ENCODE measurements at regions of chr1 and their contacts with region 1.

Region 1: DNA sequence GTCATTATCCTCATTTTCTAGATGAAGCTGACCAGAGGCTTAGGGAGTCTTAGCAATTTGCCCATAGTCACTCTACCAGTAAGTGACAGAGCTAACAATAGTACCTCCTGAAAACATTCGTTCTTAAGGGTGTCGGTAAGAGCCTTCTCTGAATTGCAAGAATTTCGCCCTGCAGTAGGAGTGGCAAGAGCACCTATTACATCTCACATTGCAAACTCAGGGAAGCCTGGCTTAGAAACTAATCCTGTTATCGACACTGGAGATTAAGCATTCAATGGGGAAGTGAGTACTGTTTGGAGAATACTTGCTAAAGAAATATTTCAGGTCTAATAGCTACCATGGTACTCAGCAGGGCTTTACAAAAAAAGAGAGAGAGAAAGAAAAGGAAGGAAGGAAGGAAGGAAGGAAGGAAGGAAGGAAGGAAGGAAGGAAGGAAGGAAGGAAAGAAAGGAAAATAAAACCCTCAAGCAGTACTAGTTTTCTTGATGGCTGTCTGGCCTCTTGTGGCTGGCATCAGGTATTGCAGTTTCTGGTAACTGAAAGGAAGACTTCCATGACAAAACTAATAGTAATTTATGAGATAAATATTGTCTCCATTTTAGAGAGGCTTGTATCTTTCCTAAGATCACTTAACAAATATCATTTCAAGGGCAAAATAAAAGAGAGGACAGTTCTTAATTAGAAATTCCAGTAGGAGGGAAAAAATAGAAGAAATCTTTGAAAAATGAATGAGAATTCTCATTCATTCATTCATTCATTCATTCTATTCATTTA is 10.4 kb downstream of the C1orf226 start:
- DNase-seq: peak; percentile 99
- H3K4me3 ChIP-seq: peak overlapping the region; percentile 4
- H3K27ac ChIP-seq: peak overlapping the region; percentile 99
- H3K4me1 ChIP-seq: peaks cover 63% of the 10 kb centered on the region
- H3K27me3 ChIP-seq: no peaks in the 10 kb centered on the region
- CTCF ChIP-seq: peak; percentile 86

Region 2: DNA sequence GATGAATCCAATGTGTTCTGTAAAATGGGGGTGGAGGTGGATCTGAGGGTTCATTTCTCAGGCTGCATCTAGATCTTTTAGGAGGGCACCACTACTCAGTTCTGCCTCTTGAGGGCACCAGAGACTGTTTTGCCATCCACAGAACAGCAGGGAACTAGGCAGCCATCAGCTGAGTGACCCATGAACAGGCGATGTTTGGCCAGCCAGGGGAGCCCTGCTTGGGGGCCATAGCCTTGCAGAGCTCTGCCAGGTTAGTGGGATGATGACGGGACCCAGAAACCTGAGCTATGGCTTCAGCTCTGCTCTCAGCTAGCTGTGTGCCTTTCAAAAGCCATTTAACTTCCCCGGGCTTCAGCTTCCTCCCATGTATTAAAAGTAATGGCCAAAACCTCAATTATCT is 335.9 kb before region 1 on chr1:
- CTCF ChIA-PET with region 1: interaction called, 17 read pairs
- POLR2A ChIA-PET with region 1: no interaction called
- intact Hi-C with region 1: loop called (anchors 1 kb)
- DNase-seq: peak; percentile 87
- H3K4me3 ChIP-seq: no peak overlapping the region
- H3K27ac ChIP-seq: peak overlapping the region; percentile 38
- H3K4me1 ChIP-seq: peaks cover 16% of the 10 kb centered on the region
- H3K27me3 ChIP-seq: no peaks in the 10 kb centered on the region
- CTCF ChIP-seq: peak; percentile 97

Region 3: GRCh38 chr1:162168249-162168648 is 223.7 kb before region 1 on chr1:
- CTCF ChIA-PET with region 1: no interaction called
- POLR2A ChIA-PET with region 1: no interaction called
- intact Hi-C with region 1: loop called (anchors 5 kb)
- DNase-seq: no peak
- H3K4me3 ChIP-seq: no peak overlapping the region
- H3K27ac ChIP-seq: peak overlapping the region; percentile 78
- H3K4me1 ChIP-seq: peaks cover 70% of the 10 kb centered on the region
- H3K27me3 ChIP-seq: no peaks in the 10 kb centered on the region
- CTCF ChIP-seq: no peak

Region 4: DNA sequence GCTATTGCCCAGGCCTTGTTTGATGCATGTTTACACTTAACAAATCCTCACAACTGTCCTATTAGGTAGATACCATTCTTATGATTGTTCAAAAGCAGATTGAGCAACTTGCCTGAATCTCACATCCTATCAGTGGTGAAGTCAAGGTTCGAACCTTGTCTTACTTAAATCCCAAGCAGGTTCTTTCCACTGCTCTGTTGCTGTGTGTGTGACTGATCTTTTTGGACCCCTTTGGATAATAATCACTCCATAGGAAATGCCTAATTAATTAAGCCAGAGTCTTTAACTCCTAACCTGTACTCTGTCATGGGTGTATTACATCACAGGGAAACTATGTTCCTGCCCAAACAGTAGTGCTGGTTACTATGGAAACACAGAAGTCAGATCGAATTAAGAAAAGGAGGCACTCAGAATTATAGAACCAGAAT is 99.5 kb before region 1 on chr1:
- CTCF ChIA-PET with region 1: interaction called, 4 read pairs
- POLR2A ChIA-PET with region 1: interaction called, 5 read pairs
- intact Hi-C with region 1: loop called (anchors 1 kb)
- DNase-seq: peak; percentile 59
- H3K4me3 ChIP-seq: no peak overlapping the region
- H3K27ac ChIP-seq: peak overlapping the region; percentile 16
- H3K4me1 ChIP-seq: peaks cover 83% of the 10 kb centered on the region
- H3K27me3 ChIP-seq: no peaks in the 10 kb centered on the region
- CTCF ChIP-seq: no peak

Region 5: GRCh38 chr1:162835157-162835899 is 443.4 kb after region 1 on chr1:
- CTCF ChIA-PET with region 1: no interaction called
- POLR2A ChIA-PET with region 1: no interaction called
- intact Hi-C with region 1: loop called (anchors 5 kb)
- DNase-seq: no peak
- H3K4me3 ChIP-seq: no peak overlapping the region
- H3K27ac ChIP-seq: no peak overlapping the region
- H3K4me1 ChIP-seq: peaks cover 7% of the 10 kb centered on the region
- H3K27me3 ChIP-seq: no peaks in the 10 kb centered on the region
- CTCF ChIP-seq: no peak

Measured in A673 (cell line).